ENCODE measurements at regions of chr14 and their contacts with region 1.

Region 1: GRCh38 chr14:65412032-65412846 is at the start of gene FUT8:
- DNase-seq: peak; percentile 59
- H3K4me3 ChIP-seq: peak within 1 kb of the TSS; percentile 74 to 87 (median 82)
- H3K27ac ChIP-seq: peak within 1 kb of the TSS; percentile 86 to 97 (median 94)
- H3K4me1 ChIP-seq: peaks cover 6 to 30% (median 7%) of the 10 kb centered on the region in 3 donors
- H3K27me3 ChIP-seq: no peaks in the 10 kb centered on the region
- CTCF ChIP-seq: peak in 5 of 6 experiments; percentile 41 to 70 (median 57)
- POLR2A ChIP-seq: peak in 2 of 4 donors; percentile 70 to 89
- total RNA-seq, gene FUT8: 5.5 to 25.4 (median 8.8) TPM

Region 2: GRCh38 chr14:65229751-65230749 is 182.2 kb before region 1 on chr14:
- intact Hi-C with region 1: loop called (anchors 5 kb)
- DNase-seq: no peak
- H3K4me3 ChIP-seq: peak overlapping the region in 3 of 4 donors; percentile 35 to 61 (median 45)
- H3K27ac ChIP-seq: peak overlapping the region; percentile 54 to 83 (median 80)
- H3K4me1 ChIP-seq: peaks cover 14 to 59% (median 20%) of the 10 kb centered on the region in 3 donors
- H3K27me3 ChIP-seq: no peaks in the 10 kb centered on the region
- CTCF ChIP-seq: no peak
- POLR2A ChIP-seq: no peak

Region 3: DNA sequence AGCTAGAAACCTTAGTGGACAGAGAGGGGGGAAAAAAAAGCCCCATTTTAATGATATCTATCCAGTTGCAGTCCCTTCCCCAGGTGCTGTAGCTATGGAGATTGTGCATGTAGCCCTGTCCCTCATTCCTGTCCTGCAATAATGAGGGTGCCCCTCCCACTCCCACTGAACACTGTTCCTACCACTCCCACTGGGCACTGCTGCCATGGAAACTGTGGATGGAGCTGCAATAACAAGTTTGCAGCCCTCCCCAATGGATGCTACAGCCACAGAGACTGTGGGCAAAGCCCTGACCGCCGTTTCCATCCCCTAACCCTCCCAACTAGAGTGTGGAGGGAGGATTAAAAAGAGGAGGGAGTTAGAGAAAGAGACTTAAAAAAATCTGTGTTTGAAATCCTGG is 238.6 kb after region 1 on chr14:
- intact Hi-C with region 1: no loop called
- DNase-seq: no peak
- H3K4me3 ChIP-seq: no peak overlapping the region
- H3K27ac ChIP-seq: no peak overlapping the region
- H3K4me1 ChIP-seq: no peaks in the 10 kb centered on the region
- H3K27me3 ChIP-seq: no peaks in the 10 kb centered on the region
- CTCF ChIP-seq: no peak
- POLR2A ChIP-seq: no peak

Region 4: DNA sequence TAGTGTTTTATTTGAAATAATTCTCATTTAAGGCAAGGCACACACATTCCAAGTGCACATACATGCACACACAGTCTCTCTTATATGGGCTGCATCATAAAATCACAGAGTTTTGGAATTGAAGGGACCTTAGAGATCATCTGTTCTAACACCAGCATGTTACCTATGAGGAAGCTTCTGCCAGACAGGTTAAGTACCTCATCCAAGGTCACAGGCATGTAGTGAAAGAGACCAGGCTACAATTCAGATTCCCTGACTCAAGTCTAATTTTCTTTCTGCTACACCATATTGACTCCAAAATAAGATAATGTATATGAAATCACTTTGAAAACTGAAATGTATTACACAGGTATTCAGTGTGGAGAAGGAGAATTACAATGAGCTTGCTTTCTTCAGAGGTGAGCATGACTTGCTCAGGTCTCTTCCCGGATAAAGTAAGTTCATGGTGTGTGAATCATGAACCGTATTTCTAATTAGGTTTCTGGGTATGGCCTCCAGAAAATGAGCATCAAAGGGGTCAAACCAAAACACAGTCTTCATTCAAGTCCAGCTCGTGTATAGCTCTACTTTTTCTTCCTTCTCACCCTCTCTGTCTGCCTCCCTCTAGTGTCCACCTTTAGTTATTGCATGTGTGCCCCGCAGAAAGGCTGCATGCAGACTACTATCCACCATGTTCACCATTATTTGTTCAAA is 412.2 kb after region 1 on chr14:
- intact Hi-C with region 1: loop called (anchors 5 kb)
- DNase-seq: no peak
- H3K4me3 ChIP-seq: no peak overlapping the region
- H3K27ac ChIP-seq: no peak overlapping the region
- H3K4me1 ChIP-seq: no peaks in the 10 kb centered on the region
- H3K27me3 ChIP-seq: peaks cover 0 to 52% (median 0%) of the 10 kb centered on the region in 4 donors
- CTCF ChIP-seq: peak; percentile 85 to 95 (median 89)
- POLR2A ChIP-seq: no peak

Measured in esophagus squamous epithelium (tissue), 5 donors.